CD8-positive, alpha-beta T cell (primary cell): ENCODE measurements at regions of chr2 and their contacts with region 1.

Region 1: DNA sequence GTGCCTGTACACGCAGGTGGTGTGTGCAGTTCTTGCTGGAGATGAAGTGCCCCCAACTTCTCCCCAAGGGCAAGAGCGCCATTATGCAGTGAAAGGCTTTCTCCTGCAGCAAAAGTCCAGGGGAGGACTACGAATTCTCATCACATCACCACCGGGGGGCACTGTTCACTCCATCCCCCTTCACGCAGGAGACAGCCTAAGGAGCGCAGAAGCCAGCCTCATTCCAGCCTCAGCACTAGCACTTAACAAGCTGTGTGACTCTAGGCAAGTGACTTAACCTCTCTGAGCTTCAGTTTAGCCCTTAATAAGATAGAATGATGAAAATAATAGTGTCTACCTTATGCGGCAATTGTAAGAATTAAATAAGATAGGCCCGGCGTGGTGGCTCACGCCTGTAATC is 32.3 kb downstream of the DNMT3A start:
- DNase-seq: peak; percentile 40 to 80 (median 75)
- ATAC-seq: peak; percentile 39
- H3K4me3 ChIP-seq: no peak overlapping the region
- H3K4me3 Mint-ChIP-seq: peak overlapping the region; percentile 11
- H3K27ac ChIP-seq: no peak overlapping the region
- H3K27ac Mint-ChIP-seq: peak overlapping the region; percentile 79
- H3K4me1 ChIP-seq: peaks cover 90% of the 10 kb centered on the region
- H3K4me1 Mint-ChIP-seq: peaks cover 85% of the 10 kb centered on the region
- H3K27me3 ChIP-seq: no peaks in the 10 kb centered on the region
- H3K27me3 Mint-ChIP-seq: no peaks in the 10 kb centered on the region
- CTCF ChIP-seq: peak; percentile 51

Region 2: GRCh38 chr2:25286025-25286400 is 23.4 kb before region 1 on chr2:
- CTCF ChIA-PET with region 1: interaction called, 20 read pairs
- POLR2A ChIA-PET with region 1: interaction called, 9 read pairs
- intact Hi-C with region 1: no loop called
- DNase-seq: peak; percentile 45 to 88 (median 77)
- ATAC-seq: peak; percentile 99
- H3K4me3 ChIP-seq: peak overlapping the region; percentile 4 to 25
- H3K4me3 Mint-ChIP-seq: peak overlapping the region; percentile 60
- H3K27ac ChIP-seq: peak overlapping the region; percentile 72 to 78
- H3K27ac Mint-ChIP-seq: peak overlapping the region; percentile 98
- H3K4me1 ChIP-seq: peaks cover 70% of the 10 kb centered on the region
- H3K4me1 Mint-ChIP-seq: peaks cover 66% of the 10 kb centered on the region
- H3K27me3 ChIP-seq: no peaks in the 10 kb centered on the region
- H3K27me3 Mint-ChIP-seq: no peaks in the 10 kb centered on the region
- CTCF ChIP-seq: no peak

Region 3: GRCh38 chr2:25323042-25323514 is 13.7 kb after region 1 on chr2:
- CTCF ChIA-PET with region 1: interaction called, 11 read pairs
- POLR2A ChIA-PET with region 1: interaction called, 7 read pairs
- intact Hi-C with region 1: no loop called
- DNase-seq: peak in 8 of 9 experiments; percentile 29 to 77 (median 60)
- ATAC-seq: peak; percentile 69
- H3K4me3 ChIP-seq: peak overlapping the region; percentile 21 to 55
- H3K4me3 Mint-ChIP-seq: peak overlapping the region; percentile 82
- H3K27ac ChIP-seq: peak overlapping the region in 1 of 2 experiments; percentile 64
- H3K27ac Mint-ChIP-seq: peak overlapping the region; percentile 92
- H3K4me1 ChIP-seq: peaks cover 25% of the 10 kb centered on the region
- H3K4me1 Mint-ChIP-seq: peaks cover 58% of the 10 kb centered on the region
- H3K27me3 ChIP-seq: no peaks in the 10 kb centered on the region
- H3K27me3 Mint-ChIP-seq: no peaks in the 10 kb centered on the region
- CTCF ChIP-seq: no peak

Region 4: GRCh38 chr2:25342372-25343186 is 33.2 kb after region 1 on chr2:
- CTCF ChIA-PET with region 1: interaction called, 23 read pairs
- POLR2A ChIA-PET with region 1: interaction called, 6 read pairs
- intact Hi-C with region 1: loop called (anchors 1 to 2 kb)
- DNase-seq: peak; percentile 62 to 91 (median 80)
- ATAC-seq: peak; percentile 85
- H3K4me3 ChIP-seq: peak overlapping the region; percentile 22 to 53
- H3K4me3 Mint-ChIP-seq: peak overlapping the region; percentile 85
- H3K27ac ChIP-seq: no peak overlapping the region
- H3K27ac Mint-ChIP-seq: peak overlapping the region; percentile 77
- H3K4me1 ChIP-seq: peaks cover 42% of the 10 kb centered on the region
- H3K4me1 Mint-ChIP-seq: peaks cover 33% of the 10 kb centered on the region
- H3K27me3 ChIP-seq: no peaks in the 10 kb centered on the region
- H3K27me3 Mint-ChIP-seq: no peaks in the 10 kb centered on the region
- CTCF ChIP-seq: peak; percentile 87

Region 5: GRCh38 chr2:25521665-25522387 is 212.4 kb after region 1 on chr2:
- CTCF ChIA-PET with region 1: interaction called, 3 read pairs
- POLR2A ChIA-PET with region 1: no interaction called
- intact Hi-C with region 1: loop called (anchors 1 to 2 kb)
- DNase-seq: peak in 7 of 9 experiments; percentile 3 to 88 (median 25)
- ATAC-seq: peak; percentile 100
- H3K4me3 ChIP-seq: no peak overlapping the region
- H3K4me3 Mint-ChIP-seq: peak overlapping the region; percentile 30
- H3K27ac ChIP-seq: peak overlapping the region in 1 of 2 experiments; percentile 51
- H3K27ac Mint-ChIP-seq: peak overlapping the region; percentile 46
- H3K4me1 ChIP-seq: peaks cover 4% of the 10 kb centered on the region
- H3K4me1 Mint-ChIP-seq: peaks cover 7% of the 10 kb centered on the region
- H3K27me3 ChIP-seq: no peaks in the 10 kb centered on the region
- H3K27me3 Mint-ChIP-seq: no peaks in the 10 kb centered on the region
- CTCF ChIP-seq: peak; percentile 78